Activated naive CD4-positive, alpha-beta T cell treated with anti-CD3 and anti-CD28 coated beads for 36 hours (primary cell): ENCODE measurements at regions of chrX and their contacts with region 1.

Region 1: GRCh38 chrX:12946838-12947544 is 27.9 kb upstream of the TMSB4X start:
- DNase-seq: peak; percentile 85
- H3K4me3 Mint-ChIP-seq: peak overlapping the region; percentile 41
- H3K27ac Mint-ChIP-seq: peak overlapping the region; percentile 98
- H3K4me1 Mint-ChIP-seq: peaks cover 55% of the 10 kb centered on the region
- H3K27me3 Mint-ChIP-seq: no peaks in the 10 kb centered on the region

Region 2: GRCh38 chrX:12403474-12404082 is 543.4 kb before region 1 on chrX:
- CTCF ChIA-PET with region 1: no interaction called
- intact Hi-C with region 1: no loop called
- DNase-seq: no peak
- H3K4me3 Mint-ChIP-seq: no peak overlapping the region
- H3K27ac Mint-ChIP-seq: no peak overlapping the region
- H3K4me1 Mint-ChIP-seq: no peaks in the 10 kb centered on the region
- H3K27me3 Mint-ChIP-seq: no peaks in the 10 kb centered on the region

Region 3: DNA sequence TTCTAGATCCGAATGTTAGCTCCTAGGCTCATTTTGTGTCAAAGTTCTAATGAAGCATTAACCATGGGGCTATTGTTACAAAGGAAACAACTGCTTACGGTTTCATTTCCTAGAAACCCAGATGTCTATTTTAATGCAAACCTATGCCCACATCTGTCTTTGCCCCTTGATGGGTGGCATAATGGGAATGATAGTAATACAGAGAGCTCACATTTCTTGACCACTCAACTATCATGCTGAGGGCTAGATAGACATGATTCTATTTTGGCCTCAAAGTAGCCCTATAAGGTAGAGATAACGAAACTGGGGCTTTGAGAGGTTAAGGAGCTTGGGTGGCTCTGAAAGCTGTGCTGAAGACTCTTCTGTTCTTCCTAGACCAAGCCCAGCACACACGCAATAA is 78.2 kb before region 1 on chrX:
- CTCF ChIA-PET with region 1: no interaction called
- intact Hi-C with region 1: no loop called
- DNase-seq: no peak
- H3K4me3 Mint-ChIP-seq: no peak overlapping the region
- H3K27ac Mint-ChIP-seq: no peak overlapping the region
- H3K4me1 Mint-ChIP-seq: peaks cover 14% of the 10 kb centered on the region
- H3K27me3 Mint-ChIP-seq: no peaks in the 10 kb centered on the region

Region 4: GRCh38 chrX:12984629-12985319 is 37.8 kb after region 1 on chrX:
- CTCF ChIA-PET with region 1: interaction called, 12 read pairs
- intact Hi-C with region 1: loop called (anchors 5 kb)
- DNase-seq: peak; percentile 54
- H3K4me3 Mint-ChIP-seq: peak overlapping the region; percentile 54
- H3K27ac Mint-ChIP-seq: peak overlapping the region; percentile 95
- H3K4me1 Mint-ChIP-seq: peaks cover 77% of the 10 kb centered on the region
- H3K27me3 Mint-ChIP-seq: no peaks in the 10 kb centered on the region

Region 5: DNA sequence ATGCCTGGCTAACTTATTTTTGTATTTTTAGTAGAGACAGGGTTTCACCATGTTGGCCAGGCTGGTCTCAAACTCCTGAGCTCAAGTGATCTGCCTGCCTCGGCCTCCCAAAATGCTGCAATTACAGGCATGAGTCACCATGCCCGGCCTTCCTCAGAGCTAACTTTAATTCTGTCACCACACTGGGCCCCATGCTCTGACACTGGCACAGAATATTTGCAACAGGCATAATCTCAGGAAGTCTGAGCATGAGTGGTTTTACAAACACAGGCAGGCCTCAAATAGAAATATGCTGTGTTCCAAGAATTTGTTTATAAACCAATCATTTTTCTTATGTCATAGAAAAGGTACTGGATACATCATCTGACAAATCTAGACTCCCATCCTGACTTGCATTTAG is 130.2 kb after region 1 on chrX:
- CTCF ChIA-PET with region 1: interaction called, 7 read pairs
- intact Hi-C with region 1: loop called (anchors 1 kb)
- DNase-seq: peak; percentile 69
- H3K4me3 Mint-ChIP-seq: no peak overlapping the region
- H3K27ac Mint-ChIP-seq: peak overlapping the region; percentile 80
- H3K4me1 Mint-ChIP-seq: peaks cover 72% of the 10 kb centered on the region
- H3K27me3 Mint-ChIP-seq: no peaks in the 10 kb centered on the region

Region 6: GRCh38 chrX:13360146-13360545 is 413.2 kb after region 1 on chrX:
- CTCF ChIA-PET with region 1: interaction called, 3 read pairs
- intact Hi-C with region 1: loop called (anchors 1 kb)
- DNase-seq: peak; percentile 10
- H3K4me3 Mint-ChIP-seq: no peak overlapping the region
- H3K27ac Mint-ChIP-seq: no peak overlapping the region
- H3K4me1 Mint-ChIP-seq: no peaks in the 10 kb centered on the region
- H3K27me3 Mint-ChIP-seq: no peaks in the 10 kb centered on the region

Region 7: GRCh38 chrX:13398073-13398823 is 451.3 kb after region 1 on chrX:
- CTCF ChIA-PET with region 1: no interaction called
- intact Hi-C with region 1: no loop called
- DNase-seq: peak; percentile 20
- H3K4me3 Mint-ChIP-seq: no peak overlapping the region
- H3K27ac Mint-ChIP-seq: no peak overlapping the region
- H3K4me1 Mint-ChIP-seq: peaks cover 8% of the 10 kb centered on the region
- H3K27me3 Mint-ChIP-seq: no peaks in the 10 kb centered on the region

Region 8: DNA sequence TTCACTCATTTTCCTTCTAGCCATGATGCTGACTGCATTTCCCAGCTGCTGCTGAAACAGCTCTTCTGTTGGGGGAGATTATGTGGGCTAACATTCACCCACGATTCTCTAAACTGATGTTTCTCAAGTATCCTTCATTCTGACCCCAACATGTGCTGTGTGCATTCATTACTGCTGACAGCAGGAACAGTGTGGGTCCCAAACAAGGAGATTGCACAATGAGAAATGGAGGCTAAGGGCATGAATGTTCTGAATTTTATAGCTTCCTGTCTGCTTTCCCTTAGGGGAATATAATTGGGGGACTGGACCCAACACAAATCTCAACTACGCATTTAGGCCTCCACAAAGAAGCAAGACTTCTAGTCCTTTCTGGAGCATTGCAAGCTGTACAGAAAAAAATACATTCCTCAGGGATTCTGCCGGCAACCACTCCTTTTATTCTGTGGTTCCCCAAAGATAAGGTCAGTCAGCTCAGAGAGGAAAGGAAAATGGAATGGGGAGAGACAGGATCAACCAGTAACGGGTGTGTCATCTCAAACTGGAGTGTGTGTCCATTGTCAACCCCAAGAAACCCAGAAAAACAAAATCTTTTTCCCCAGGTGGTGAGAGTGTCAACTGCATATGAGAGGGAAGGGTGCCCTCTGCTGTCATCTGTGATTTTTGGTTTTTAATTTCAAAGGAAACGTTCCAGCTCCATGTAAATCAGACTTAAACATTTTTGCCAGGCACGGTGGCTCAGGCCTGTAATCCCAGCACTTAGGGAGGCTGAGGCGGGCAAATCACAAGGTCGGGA is 540.9 kb after region 1 on chrX:
- CTCF ChIA-PET with region 1: interaction called, 36 read pairs
- intact Hi-C with region 1: loop called (anchors 1 kb)
- DNase-seq: peak; percentile 58
- H3K4me3 Mint-ChIP-seq: no peak overlapping the region
- H3K27ac Mint-ChIP-seq: peak overlapping the region; percentile 68
- H3K4me1 Mint-ChIP-seq: peaks cover 16% of the 10 kb centered on the region
- H3K27me3 Mint-ChIP-seq: no peaks in the 10 kb centered on the region

Region 9: GRCh38 chrX:13688958-13689740 is 742.2 kb after region 1 on chrX and contains the start of gene RAB9A:
- CTCF ChIA-PET with region 1: no interaction called
- intact Hi-C with region 1: loop called (anchors 5 kb)
- DNase-seq: peak; percentile 83
- H3K4me3 Mint-ChIP-seq: peak within 1 kb of the TSS; percentile 82
- H3K27ac Mint-ChIP-seq: peak within 1 kb of the TSS; percentile 96
- H3K4me1 Mint-ChIP-seq: peaks cover 65% of the 10 kb centered on the region
- H3K27me3 Mint-ChIP-seq: no peaks in the 10 kb centered on the region
- total RNA-seq, gene RAB9A: 22.8 to 23.3 TPM